ENCODE measurements at regions of chr16 and their contacts with region 1.

Region 1: DNA sequence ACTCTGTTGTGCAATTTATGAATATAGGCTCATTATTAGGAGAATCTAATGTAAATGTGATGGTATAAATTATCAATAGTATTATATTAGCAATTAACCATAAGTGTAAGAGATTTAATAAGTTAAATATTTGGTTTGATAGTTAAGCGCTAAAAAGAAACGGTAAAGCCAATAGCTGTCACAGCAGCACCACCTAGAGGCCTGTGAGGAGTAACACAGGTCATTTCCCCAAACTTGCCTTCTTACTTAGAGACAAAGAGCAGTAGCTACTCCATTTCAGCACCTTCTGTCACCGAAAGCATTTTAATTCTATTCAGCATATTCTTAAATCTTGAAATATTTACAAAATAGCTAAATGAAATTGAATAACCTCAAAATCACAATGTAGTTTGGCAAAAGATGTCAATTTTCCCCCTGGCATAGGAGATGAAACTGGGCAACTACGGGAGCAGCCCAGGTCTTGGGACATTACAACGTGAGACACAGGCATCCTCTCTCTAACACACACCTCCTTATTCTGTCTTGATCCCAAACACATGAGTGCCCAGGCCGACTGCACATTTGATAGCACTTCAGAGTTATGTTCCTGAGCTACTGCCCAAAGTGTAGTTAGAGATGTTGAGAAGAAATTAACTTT is 14.2 kb upstream of the DYNLRB2 start:
- DNase-seq: peak; percentile 64
- H3K4me3 ChIP-seq: no peak overlapping the region
- H3K27ac ChIP-seq: no peak overlapping the region
- H3K4me1 ChIP-seq: no peaks in the 10 kb centered on the region
- H3K27me3 ChIP-seq: peaks cover 9% of the 10 kb centered on the region
- CTCF ChIP-seq: peak; percentile 86

Region 2: DNA sequence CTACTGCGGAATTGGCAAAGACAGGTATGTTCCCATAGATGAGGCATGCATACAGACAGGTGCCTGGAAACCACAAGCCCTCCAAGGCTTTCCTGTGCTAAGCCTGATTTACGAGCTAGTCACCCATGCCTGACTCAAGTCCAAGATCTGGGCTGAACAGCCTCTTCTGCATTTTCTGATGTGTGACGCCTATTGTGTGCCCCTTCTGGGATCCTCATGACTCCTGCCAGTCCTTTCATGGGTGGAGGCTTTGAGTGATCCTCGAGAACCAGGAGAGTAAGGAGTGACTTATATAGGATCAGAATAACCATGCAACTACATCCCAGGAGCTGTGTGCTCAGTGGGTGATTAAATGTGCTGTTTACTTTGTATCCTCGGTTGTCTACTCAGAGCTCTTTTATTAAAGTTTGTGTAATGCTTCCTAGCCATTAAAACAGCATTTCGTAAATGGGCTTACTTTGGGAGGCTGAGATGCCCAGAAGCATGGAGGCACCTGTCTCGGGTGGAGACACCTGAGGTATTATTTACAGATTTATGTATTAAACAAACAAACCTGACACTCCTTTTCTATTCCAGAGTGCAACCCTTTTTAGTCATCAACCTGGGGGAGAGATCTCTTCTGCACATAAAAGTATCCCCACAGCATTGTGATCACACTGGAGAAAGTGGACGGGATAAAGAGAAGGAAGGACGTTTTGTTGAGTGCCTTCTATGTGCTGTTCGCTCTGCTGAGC is 358.7 kb before region 1 on chr16:
- CTCF ChIA-PET with region 1: no interaction called
- POLR2A ChIA-PET with region 1: no interaction called
- intact Hi-C with region 1: no loop called
- DNase-seq: no peak
- H3K4me3 ChIP-seq: no peak overlapping the region
- H3K27ac ChIP-seq: no peak overlapping the region
- H3K4me1 ChIP-seq: no peaks in the 10 kb centered on the region
- H3K27me3 ChIP-seq: no peaks in the 10 kb centered on the region
- CTCF ChIP-seq: no peak

Region 3: DNA sequence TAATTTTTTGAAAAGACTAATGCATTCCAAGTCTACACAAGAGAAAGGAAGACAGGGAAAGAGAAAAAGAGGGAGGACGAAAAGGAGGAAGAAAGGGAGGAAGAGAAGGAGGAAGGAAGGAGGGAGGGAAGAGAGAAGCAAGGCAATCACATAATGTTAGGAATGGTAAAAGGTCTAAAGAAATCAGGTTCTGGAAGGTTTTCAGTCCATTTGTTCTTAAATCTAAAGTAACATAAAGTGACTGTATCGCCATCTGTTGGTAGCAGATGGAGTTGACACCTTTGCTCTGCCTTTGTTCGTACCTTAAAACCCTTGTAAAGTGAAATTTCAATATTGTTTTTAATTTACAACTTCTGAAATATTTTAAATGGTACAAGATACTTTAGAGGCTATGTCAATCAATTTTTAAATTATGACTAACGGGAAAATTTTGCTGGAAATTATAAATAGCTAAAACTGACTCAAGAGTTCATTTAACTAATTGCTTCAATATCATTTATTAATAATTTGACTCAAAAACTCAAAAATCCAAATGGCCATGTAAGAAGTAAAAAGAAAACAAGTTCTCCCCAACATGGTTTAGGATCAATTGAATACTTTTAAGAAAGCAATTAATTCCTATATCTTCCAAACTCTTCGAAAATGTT is 298.3 kb after region 1 on chr16:
- CTCF ChIA-PET with region 1: no interaction called
- POLR2A ChIA-PET with region 1: no interaction called
- intact Hi-C with region 1: loop called (anchors 2 kb)
- DNase-seq: peak; percentile 54
- H3K4me3 ChIP-seq: no peak overlapping the region
- H3K27ac ChIP-seq: no peak overlapping the region
- H3K4me1 ChIP-seq: no peaks in the 10 kb centered on the region
- H3K27me3 ChIP-seq: peaks cover 54% of the 10 kb centered on the region
- CTCF ChIP-seq: peak; percentile 79

Measured in A673 (cell line).